B cell (primary cell): ENCODE measurements at regions of chr18 and their contacts with region 1.

Region 1: GRCh38 chr18:58043491-58044379 is at the start of gene NEDD4L:
- DNase-seq: peak; percentile 89
- ATAC-seq: peak; percentile 86
- H3K4me3 ChIP-seq: peak within 1 kb of the TSS; percentile 51 to 98 (median 87)
- H3K4me3 Mint-ChIP-seq: peak within 1 kb of the TSS; percentile 98
- H3K27ac ChIP-seq: peak within 1 kb of the TSS; percentile 63 to 71
- H3K27ac Mint-ChIP-seq: peak within 1 kb of the TSS; percentile 96
- H3K4me1 ChIP-seq: peaks cover 14 to 41% of the 10 kb centered on the region in 2 donors
- H3K4me1 Mint-ChIP-seq: peaks cover 36% of the 10 kb centered on the region
- H3K27me3 ChIP-seq: no peaks in the 10 kb centered on the region
- H3K27me3 Mint-ChIP-seq: no peaks in the 10 kb centered on the region
- CTCF ChIP-seq: peak; percentile 81
- total RNA-seq, gene NEDD4L: 25.7 and 29.5 TPM in 2 replicates

Region 2: GRCh38 chr18:57630002-57630753 is 413.6 kb before region 1 on chr18:
- CTCF ChIA-PET with region 1: interaction called, 7 read pairs
- POLR2A ChIA-PET with region 1: no interaction called
- intact Hi-C with region 1: loop called (anchors 1 kb)
- DNase-seq: peak; percentile 95
- ATAC-seq: peak; percentile 93
- H3K4me3 ChIP-seq: peak overlapping the region; percentile 89 to 99 (median 98)
- H3K4me3 Mint-ChIP-seq: peak overlapping the region; percentile 97
- H3K27ac ChIP-seq: peak overlapping the region; percentile 82 to 85
- H3K27ac Mint-ChIP-seq: peak overlapping the region; percentile 98
- H3K4me1 ChIP-seq: peaks cover 12 to 13% of the 10 kb centered on the region in 2 donors
- H3K4me1 Mint-ChIP-seq: peaks cover 23% of the 10 kb centered on the region
- H3K27me3 ChIP-seq: no peaks in the 10 kb centered on the region
- H3K27me3 Mint-ChIP-seq: no peaks in the 10 kb centered on the region
- CTCF ChIP-seq: peak; percentile 77

Region 3: GRCh38 chr18:57881818-57882413 is 161.8 kb before region 1 on chr18:
- CTCF ChIA-PET with region 1: interaction called, 11 read pairs
- POLR2A ChIA-PET with region 1: no interaction called
- intact Hi-C with region 1: no loop called
- DNase-seq: peak; percentile 76
- ATAC-seq: peak; percentile 94
- H3K4me3 ChIP-seq: no peak overlapping the region
- H3K4me3 Mint-ChIP-seq: no peak overlapping the region
- H3K27ac ChIP-seq: no peak overlapping the region
- H3K27ac Mint-ChIP-seq: no peak overlapping the region
- H3K4me1 ChIP-seq: peaks cover 0 to 3% of the 10 kb centered on the region in 2 donors
- H3K4me1 Mint-ChIP-seq: peaks cover 4% of the 10 kb centered on the region
- H3K27me3 ChIP-seq: no peaks in the 10 kb centered on the region
- H3K27me3 Mint-ChIP-seq: no peaks in the 10 kb centered on the region
- CTCF ChIP-seq: peak; percentile 97

Region 4: GRCh38 chr18:58015065-58015780 is 28.5 kb before region 1 on chr18:
- CTCF ChIA-PET with region 1: interaction called, 10 read pairs
- POLR2A ChIA-PET with region 1: no interaction called
- intact Hi-C with region 1: loop called (anchors 1 kb)
- DNase-seq: peak; percentile 84
- ATAC-seq: peak; percentile 100
- H3K4me3 ChIP-seq: peak overlapping the region in 1 of 5 experiments; percentile 4
- H3K4me3 Mint-ChIP-seq: peak overlapping the region; percentile 67
- H3K27ac ChIP-seq: peak overlapping the region in 1 of 2 donors; percentile 69
- H3K27ac Mint-ChIP-seq: peak overlapping the region; percentile 78
- H3K4me1 ChIP-seq: peaks cover 23 to 34% of the 10 kb centered on the region in 2 donors
- H3K4me1 Mint-ChIP-seq: peaks cover 31% of the 10 kb centered on the region
- H3K27me3 ChIP-seq: no peaks in the 10 kb centered on the region
- H3K27me3 Mint-ChIP-seq: peaks cover 12% of the 10 kb centered on the region
- CTCF ChIP-seq: no peak

Region 5: DNA sequence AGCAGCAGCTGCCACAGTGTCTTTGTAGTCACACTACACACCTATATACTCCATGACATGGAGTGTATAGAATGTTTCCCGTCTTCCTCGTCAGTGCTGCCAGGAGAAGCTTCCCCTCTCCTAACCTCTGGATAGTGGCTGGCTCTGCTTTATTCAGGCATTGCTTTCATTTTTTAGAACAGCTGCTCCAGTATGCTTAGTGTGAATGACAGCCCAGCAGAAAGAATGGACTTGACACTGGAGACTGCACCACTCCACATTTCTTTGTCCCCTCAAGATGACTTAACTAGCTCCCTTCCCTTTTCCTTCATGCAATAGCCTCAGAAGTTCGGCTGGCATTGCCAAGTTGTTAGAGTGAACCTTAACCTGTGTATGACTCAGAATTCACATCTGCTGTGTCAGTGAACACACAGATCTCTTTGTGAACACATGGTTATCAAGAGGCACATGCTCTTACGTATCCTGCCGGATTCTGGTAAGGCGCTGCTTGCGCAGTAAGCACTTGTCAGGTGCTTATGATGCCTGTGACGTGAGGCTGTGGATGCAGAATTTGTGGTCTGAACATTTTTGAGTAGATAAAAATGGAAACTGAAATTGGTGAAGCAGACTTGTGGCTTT is 74.2 kb after region 1 on chr18:
- CTCF ChIA-PET with region 1: interaction called, 65 read pairs
- POLR2A ChIA-PET with region 1: interaction called, 3 read pairs
- intact Hi-C with region 1: loop called (anchors 1 kb)
- DNase-seq: no peak
- ATAC-seq: no peak
- H3K4me3 ChIP-seq: no peak overlapping the region
- H3K4me3 Mint-ChIP-seq: no peak overlapping the region
- H3K27ac ChIP-seq: no peak overlapping the region
- H3K27ac Mint-ChIP-seq: no peak overlapping the region
- H3K4me1 ChIP-seq: peaks cover 5 to 6% of the 10 kb centered on the region in 2 donors
- H3K4me1 Mint-ChIP-seq: peaks cover 7% of the 10 kb centered on the region
- H3K27me3 ChIP-seq: peaks cover 0 to 3% (median 0%) of the 10 kb centered on the region in 4 experiments
- H3K27me3 Mint-ChIP-seq: no peaks in the 10 kb centered on the region
- CTCF ChIP-seq: no peak

Region 6: DNA sequence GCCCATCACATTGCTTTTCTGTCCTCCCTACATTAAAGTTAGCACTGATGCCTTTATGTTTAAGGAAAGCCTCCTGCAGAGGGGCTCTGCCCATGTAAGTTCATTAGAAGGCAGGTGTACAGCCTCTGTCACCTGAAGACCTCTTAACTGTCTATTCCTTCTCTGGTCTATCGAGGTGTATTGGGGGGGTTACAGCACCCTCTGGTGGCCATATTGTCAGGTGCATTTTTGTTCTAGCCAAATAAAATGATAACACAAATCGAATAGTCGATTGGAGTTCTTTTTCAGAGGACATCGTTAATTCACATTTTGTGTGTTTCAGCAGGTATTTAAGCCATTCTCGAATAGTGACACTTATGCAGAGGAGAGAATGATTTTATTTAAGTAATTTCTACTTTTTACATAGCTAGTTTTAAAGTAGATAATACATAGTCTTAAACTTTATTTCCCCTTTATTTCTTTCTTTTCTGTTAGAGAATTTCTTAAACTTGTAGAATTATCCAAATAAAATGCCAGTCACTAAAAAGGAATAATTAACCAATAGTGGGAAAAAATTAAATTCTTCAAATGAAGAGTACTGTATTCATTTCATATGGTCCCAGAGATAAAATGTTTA is 137.1 kb after region 1 on chr18:
- CTCF ChIA-PET with region 1: interaction called, 8 read pairs
- POLR2A ChIA-PET with region 1: no interaction called
- intact Hi-C with region 1: loop called (anchors 1 kb)
- DNase-seq: peak; percentile 71
- ATAC-seq: peak; percentile 62
- H3K4me3 ChIP-seq: no peak overlapping the region
- H3K4me3 Mint-ChIP-seq: no peak overlapping the region
- H3K27ac ChIP-seq: no peak overlapping the region
- H3K27ac Mint-ChIP-seq: no peak overlapping the region
- H3K4me1 ChIP-seq: no peaks in the 10 kb centered on the region
- H3K4me1 Mint-ChIP-seq: peaks cover 3% of the 10 kb centered on the region
- H3K27me3 ChIP-seq: no peaks in the 10 kb centered on the region
- H3K27me3 Mint-ChIP-seq: no peaks in the 10 kb centered on the region
- CTCF ChIP-seq: peak; percentile 94